HCT116 (cell line): ENCODE measurements at regions of chrX and their contacts with region 1.

Region 1: DNA sequence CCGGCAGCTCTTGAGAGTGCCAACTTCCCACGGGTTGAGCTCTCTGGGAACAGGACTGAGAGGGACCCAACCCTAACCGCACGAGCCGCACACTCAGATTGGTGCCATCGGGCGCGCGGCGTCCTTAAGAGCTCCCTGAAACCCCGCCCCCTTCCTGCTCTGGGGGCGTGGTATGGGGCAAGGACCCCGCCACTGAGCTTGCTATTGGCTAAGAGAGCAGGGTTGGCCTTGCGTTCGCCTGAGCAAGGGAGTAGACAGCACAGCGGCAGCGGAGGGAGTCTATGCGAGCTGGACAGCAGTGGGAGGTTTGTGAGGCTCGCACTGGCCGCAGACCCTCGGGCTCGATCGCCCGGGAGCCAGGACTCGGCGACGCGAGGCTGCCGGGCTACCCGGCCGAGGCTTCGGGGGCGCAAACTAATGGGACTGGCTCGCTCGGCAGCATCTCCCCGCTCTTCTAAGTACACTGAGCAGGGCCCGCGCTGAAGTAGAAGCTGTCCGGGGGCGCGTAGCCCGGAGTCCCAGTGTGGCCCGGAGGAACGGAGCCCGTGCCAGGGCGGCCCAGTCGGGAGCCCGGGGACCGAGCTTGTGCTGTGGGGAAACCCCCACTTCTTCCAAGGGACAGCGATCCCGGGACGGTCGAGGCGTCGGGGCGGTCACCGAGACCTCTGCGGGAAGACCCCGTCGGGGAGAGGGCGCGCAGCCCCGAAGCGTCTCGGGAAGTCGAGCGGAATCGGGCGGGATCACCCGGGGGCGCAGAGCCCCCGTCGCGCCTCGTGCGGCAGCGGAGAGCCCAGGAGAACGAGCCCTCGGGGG is at the start of gene EFNB1:
- DNase-seq: peak; percentile 88
- ATAC-seq: peak; percentile 83
- H3K4me3 ChIP-seq: peak within 1 kb of the TSS; percentile 61 to 72
- H3K27ac ChIP-seq: peak within 1 kb of the TSS; percentile 59; the same call in 1 of the 2 replicates
- H3K4me1 ChIP-seq: peaks cover 0 to 8% of the 10 kb centered on the region in 2 experiments; a peak in 1 of 4 replicates
- H3K27me3 ChIP-seq: no peaks in the 10 kb centered on the region
- CTCF ChIP-seq: no peak
- POLR2A ChIP-seq: peak; percentile 84
- RAD21 ChIP-seq: no peak
- total RNA-seq, gene EFNB1: 14.7 TPM

Region 2: DNA sequence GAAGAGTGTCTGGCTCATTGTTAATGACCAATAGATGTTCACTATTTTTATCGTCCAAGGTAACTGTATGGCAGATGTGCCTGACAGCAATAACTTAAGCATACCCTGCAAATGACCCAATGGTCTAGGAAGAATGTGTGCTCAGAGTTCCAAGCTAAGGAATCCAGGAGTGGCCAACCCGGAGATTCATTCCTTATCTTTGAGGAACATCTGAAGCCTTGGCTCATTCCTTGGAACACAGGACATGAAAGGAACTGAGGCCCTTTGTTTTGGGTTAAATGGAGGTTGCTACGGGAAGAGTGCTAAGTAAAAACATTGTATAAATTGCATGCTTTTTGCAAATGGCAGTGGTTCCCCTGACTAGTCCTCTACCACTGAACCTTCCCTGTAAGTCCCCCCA is 39.0 kb before region 1 on chrX:
- CTCF ChIA-PET with region 1: no interaction called
- POLR2A ChIA-PET with region 1: no interaction called
- RAD21 ChIA-PET with region 1: no interaction called
- intact Hi-C with region 1: no loop called
- DNase-seq: no peak
- ATAC-seq: no peak
- H3K4me3 ChIP-seq: no peak overlapping the region
- H3K27ac ChIP-seq: no peak overlapping the region
- H3K4me1 ChIP-seq: no peaks in the 10 kb centered on the region
- H3K27me3 ChIP-seq: no peaks in the 10 kb centered on the region
- CTCF ChIP-seq: no peak
- POLR2A ChIP-seq: no peak
- RAD21 ChIP-seq: no peak

Region 3: DNA sequence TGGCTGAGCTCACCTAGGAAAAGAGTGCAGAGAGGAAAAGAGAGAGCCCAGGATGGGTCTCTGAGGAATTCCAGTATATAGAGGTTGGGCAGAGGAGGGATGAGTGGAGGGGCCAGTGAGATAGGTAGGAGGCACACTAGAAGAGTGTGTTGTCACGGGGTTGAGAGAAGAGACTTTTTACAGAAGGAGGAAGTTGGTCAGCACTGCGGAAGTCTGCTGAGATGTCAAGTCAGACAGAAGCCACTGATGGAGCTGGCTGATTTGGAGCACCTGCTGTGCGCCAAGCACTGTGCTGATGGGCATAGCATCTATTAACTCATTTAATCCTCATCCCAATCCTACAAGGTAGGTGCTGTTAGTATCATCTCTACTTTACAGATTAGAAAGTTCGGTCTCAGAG is 60.3 kb after region 1 on chrX:
- CTCF ChIA-PET with region 1: no interaction called
- POLR2A ChIA-PET with region 1: no interaction called
- RAD21 ChIA-PET with region 1: no interaction called
- intact Hi-C with region 1: no loop called
- DNase-seq: no peak
- ATAC-seq: no peak
- H3K4me3 ChIP-seq: no peak overlapping the region
- H3K27ac ChIP-seq: no peak overlapping the region
- H3K4me1 ChIP-seq: no peaks in the 10 kb centered on the region
- H3K27me3 ChIP-seq: peaks cover 11% of the 10 kb centered on the region; the same call in 1 of the 2 replicates
- CTCF ChIP-seq: no peak
- POLR2A ChIP-seq: no peak
- RAD21 ChIP-seq: no peak

Region 4: GRCh38 chrX:69060631-69061408 is 231.9 kb after region 1 on chrX:
- CTCF ChIA-PET with region 1: interaction called, 33 read pairs
- POLR2A ChIA-PET with region 1: interaction called, 14 read pairs
- RAD21 ChIA-PET with region 1: interaction called, 5 to 29 read pairs
- intact Hi-C with region 1: loop called (anchors 1 kb)
- DNase-seq: peak; percentile 3
- ATAC-seq: peak; percentile 82
- H3K4me3 ChIP-seq: no peak overlapping the region
- H3K27ac ChIP-seq: no peak overlapping the region
- H3K4me1 ChIP-seq: no peaks in the 10 kb centered on the region
- H3K27me3 ChIP-seq: no peaks in the 10 kb centered on the region
- CTCF ChIP-seq: peak; percentile 11 to 38 (median 29); a peak in 3 of 6 replicates
- POLR2A ChIP-seq: no peak
- RAD21 ChIP-seq: peak; percentile 72

Region 5: GRCh38 chrX:69222103-69223090 is 393.5 kb after region 1 on chrX:
- CTCF ChIA-PET with region 1: interaction called, 56 read pairs
- POLR2A ChIA-PET with region 1: interaction called, 53 read pairs
- RAD21 ChIA-PET with region 1: interaction called, 9 to 14 read pairs
- intact Hi-C with region 1: loop called (anchors 1 kb)
- DNase-seq: peak; percentile 45
- ATAC-seq: peak; percentile 94
- H3K4me3 ChIP-seq: no peak overlapping the region
- H3K27ac ChIP-seq: no peak overlapping the region
- H3K4me1 ChIP-seq: no peaks in the 10 kb centered on the region; a peak in 1 of 4 replicates
- H3K27me3 ChIP-seq: no peaks in the 10 kb centered on the region
- CTCF ChIP-seq: peak; percentile 68 to 80 (median 71); a peak in 5 of 6 replicates
- POLR2A ChIP-seq: no peak
- RAD21 ChIP-seq: peak; percentile 89

Region 6: DNA sequence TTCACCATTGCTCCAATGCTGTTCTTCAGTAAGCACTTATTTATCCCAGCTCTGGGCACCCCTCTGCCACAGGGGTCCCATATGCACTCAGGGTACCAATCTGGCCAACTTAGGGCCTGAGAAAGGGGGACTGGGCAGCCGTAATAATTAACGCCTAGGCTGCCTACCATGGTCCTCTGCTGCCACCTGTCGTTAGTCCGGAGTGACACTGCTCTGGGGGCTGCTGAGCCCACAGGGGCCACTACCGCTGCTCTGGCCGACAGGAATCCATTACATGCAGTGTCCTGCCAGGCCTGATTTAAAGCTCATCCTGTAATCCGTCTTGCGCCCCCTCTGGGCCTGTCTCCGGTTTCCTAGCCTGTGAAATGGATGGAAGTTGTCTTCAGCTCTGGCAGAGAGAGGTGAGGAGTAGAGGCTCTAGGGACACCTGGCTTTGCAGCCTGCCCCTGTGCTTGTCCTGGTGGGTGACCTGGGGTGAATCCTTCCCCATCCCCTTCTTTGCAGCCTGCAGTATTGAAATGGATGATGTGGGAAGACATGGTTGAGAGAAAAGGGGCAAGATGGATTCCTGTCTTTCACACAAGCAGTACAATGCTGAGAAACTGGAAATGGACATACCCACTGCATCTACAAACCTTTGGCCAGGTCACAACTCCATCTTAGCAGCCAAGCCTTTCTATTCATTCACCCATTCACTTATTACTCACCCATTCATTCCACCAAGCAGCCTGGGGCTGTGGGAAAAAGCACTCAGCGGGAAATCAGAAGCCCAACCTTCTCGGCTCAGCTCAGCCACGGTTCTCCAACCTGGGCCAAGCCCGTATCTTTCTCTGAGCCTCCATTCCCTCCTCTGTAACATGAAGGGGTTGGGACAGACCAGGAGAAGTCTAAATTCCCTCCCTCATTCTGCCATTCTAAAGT is 558.9 kb after region 1 on chrX:
- CTCF ChIA-PET with region 1: interaction called, 26 read pairs
- POLR2A ChIA-PET with region 1: interaction called, 21 read pairs
- RAD21 ChIA-PET with region 1: interaction called in 1 of 2 experiments, 6 read pairs
- intact Hi-C with region 1: loop called (anchors 1 kb)
- DNase-seq: peak; percentile 31
- ATAC-seq: peak; percentile 98
- H3K4me3 ChIP-seq: no peak overlapping the region
- H3K27ac ChIP-seq: no peak overlapping the region
- H3K4me1 ChIP-seq: peaks cover 0 to 3% of the 10 kb centered on the region in 2 experiments; a peak in 1 of 4 replicates
- H3K27me3 ChIP-seq: 0 out of 2 replicates have a peak, but pooled peaks cover 4% of the 10 kb centered on the region
- CTCF ChIP-seq: peak; percentile 62 to 76 (median 71)
- POLR2A ChIP-seq: no peak
- RAD21 ChIP-seq: peak; percentile 85